HepG2 (cell line): ENCODE measurements at regions of chr10 and their contacts with region 1.

Region 1: DNA sequence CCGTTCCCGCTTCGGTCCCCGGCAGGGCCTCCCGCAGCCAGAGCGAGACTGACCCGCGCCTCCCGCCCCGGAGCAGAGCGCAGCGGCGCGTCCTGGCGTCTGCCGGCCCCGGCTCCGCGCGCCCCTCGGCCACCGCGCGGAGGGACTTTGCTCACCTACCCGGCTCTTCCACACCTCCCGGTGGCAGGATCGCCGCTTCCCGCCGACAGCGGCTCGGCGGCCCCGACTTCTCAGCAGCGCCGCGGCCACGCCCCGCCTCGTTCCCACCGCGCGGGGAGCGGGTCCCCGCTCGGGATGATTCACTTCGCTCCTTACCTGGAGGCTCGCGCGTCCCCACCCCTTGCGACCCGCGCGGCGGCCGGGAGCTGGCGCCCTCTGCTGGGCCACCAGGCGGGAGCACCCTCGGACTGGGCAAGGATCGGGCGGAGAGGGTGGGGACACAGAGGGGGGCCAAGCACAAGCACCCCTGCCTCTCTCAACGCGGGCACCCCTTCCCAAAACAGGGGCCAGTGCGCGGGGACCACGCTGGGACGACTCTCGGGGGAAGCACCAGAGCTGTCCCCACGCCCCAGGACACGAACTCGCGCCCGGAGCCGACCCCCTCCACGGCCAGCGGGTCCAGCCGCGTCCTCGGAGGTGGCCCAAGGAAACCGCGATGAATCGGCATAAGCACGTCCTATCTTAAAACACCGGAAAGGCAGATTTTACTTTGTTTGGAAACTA is 101.0 kb upstream of the SVIL start:
- DNase-seq: peak; percentile 61
- ATAC-seq: peak; percentile 90
- H3K4me3 ChIP-seq: peak overlapping the region; percentile 73 to 88 (median 85)
- H3K27ac ChIP-seq: peak overlapping the region; percentile 39
- H3K4me1 ChIP-seq: peaks cover 46% of the 10 kb centered on the region
- H3K27me3 ChIP-seq: peaks cover 0 to 13% of the 10 kb centered on the region in 2 experiments; a peak in 3 of 5 replicates
- CTCF ChIP-seq: peak; percentile 97
- EP300 ChIP-seq: no peak
- POLR2A ChIP-seq: peak in 1 of 2 experiments; percentile 44; a peak in 1 of 4 replicates
- RAD21 ChIP-seq: peak; percentile 81

Region 2: DNA sequence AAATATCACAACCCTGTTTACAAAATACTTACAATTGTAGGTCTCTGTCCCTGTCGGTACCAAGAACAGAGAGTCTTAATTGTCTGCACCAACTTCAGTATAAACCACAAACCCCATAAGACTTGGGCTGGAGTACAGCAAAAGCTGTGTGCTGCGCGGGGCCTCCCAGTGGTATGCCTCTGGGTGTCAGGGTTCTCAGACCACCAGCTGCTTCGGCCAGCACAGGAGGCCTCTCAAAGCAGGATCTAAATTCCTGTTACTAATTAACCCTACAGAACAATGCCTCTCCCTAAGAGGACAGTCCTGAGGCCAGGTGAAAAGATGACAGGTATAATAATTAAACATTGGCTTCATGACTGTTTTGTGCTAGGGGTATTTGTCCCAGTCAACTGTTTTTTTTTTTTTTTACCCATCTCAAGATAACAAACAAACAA is 100.0 kb before region 1 on chr10:
- CTCF ChIA-PET with region 1: no interaction called
- POLR2A ChIA-PET with region 1: interaction called, 3 read pairs
- in situ Hi-C with region 1: loop called (anchors 5 kb)
- intact Hi-C with region 1: no loop called
- DNase-seq: peak; percentile 87
- ATAC-seq: peak; percentile 100
- H3K4me3 ChIP-seq: peak overlapping the region; percentile 36 to 55 (median 37); a peak in 4 of 6 replicates
- H3K27ac ChIP-seq: peak overlapping the region; percentile 37
- H3K4me1 ChIP-seq: peaks cover 42% of the 10 kb centered on the region
- H3K27me3 ChIP-seq: no peaks in the 10 kb centered on the region
- CTCF ChIP-seq: peak; percentile 48
- EP300 ChIP-seq: peak in 1 of 2 experiments; percentile 58; a peak in 2 of 4 replicates
- POLR2A ChIP-seq: peak in 1 of 2 experiments; percentile 31; a peak in 1 of 4 replicates
- RAD21 ChIP-seq: 0 out of 2 replicates have a peak, but pooled peaks have one; percentile 15

Region 3: DNA sequence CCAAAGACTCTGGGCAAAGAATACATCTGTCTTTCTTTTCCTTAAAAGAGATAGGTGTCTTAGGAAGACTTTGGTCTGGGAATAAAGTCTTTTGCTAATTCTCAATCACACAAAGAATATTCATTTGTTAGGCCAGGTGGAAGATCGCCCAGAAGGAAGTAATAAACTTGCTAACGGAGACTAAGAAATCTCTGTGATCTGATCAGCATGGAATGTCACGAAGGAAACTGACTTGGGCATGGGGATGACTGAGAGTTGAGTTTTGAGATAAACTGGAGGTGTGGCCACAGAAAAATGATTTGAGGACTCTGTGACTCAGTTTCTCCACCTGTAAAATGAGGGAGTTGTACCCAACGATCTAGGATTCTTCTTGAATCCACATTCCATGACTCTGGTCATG is 60.1 kb after region 1 on chr10:
- CTCF ChIA-PET with region 1: no interaction called
- POLR2A ChIA-PET with region 1: no interaction called
- in situ Hi-C with region 1: no loop called
- intact Hi-C with region 1: no loop called
- DNase-seq: no peak
- ATAC-seq: no peak
- H3K4me3 ChIP-seq: no peak overlapping the region
- H3K27ac ChIP-seq: no peak overlapping the region
- H3K4me1 ChIP-seq: no peaks in the 10 kb centered on the region
- H3K27me3 ChIP-seq: no peaks in the 10 kb centered on the region
- CTCF ChIP-seq: no peak
- EP300 ChIP-seq: no peak
- POLR2A ChIP-seq: no peak
- RAD21 ChIP-seq: no peak

Region 4: GRCh38 chr10:30098613-30099012 is 362.9 kb after region 1 on chr10:
- CTCF ChIA-PET with region 1: no interaction called
- POLR2A ChIA-PET with region 1: no interaction called
- in situ Hi-C with region 1: no loop called
- intact Hi-C with region 1: no loop called
- DNase-seq: no peak
- ATAC-seq: no peak
- H3K4me3 ChIP-seq: no peak overlapping the region
- H3K27ac ChIP-seq: no peak overlapping the region
- H3K4me1 ChIP-seq: peaks cover 28% of the 10 kb centered on the region
- H3K27me3 ChIP-seq: no peaks in the 10 kb centered on the region
- CTCF ChIP-seq: no peak
- EP300 ChIP-seq: no peak
- POLR2A ChIP-seq: no peak
- RAD21 ChIP-seq: no peak